Sigmoid colon (tissue), 7 donors: ENCODE measurements at regions of chr7 and their contacts with region 1.

Region 1: DNA sequence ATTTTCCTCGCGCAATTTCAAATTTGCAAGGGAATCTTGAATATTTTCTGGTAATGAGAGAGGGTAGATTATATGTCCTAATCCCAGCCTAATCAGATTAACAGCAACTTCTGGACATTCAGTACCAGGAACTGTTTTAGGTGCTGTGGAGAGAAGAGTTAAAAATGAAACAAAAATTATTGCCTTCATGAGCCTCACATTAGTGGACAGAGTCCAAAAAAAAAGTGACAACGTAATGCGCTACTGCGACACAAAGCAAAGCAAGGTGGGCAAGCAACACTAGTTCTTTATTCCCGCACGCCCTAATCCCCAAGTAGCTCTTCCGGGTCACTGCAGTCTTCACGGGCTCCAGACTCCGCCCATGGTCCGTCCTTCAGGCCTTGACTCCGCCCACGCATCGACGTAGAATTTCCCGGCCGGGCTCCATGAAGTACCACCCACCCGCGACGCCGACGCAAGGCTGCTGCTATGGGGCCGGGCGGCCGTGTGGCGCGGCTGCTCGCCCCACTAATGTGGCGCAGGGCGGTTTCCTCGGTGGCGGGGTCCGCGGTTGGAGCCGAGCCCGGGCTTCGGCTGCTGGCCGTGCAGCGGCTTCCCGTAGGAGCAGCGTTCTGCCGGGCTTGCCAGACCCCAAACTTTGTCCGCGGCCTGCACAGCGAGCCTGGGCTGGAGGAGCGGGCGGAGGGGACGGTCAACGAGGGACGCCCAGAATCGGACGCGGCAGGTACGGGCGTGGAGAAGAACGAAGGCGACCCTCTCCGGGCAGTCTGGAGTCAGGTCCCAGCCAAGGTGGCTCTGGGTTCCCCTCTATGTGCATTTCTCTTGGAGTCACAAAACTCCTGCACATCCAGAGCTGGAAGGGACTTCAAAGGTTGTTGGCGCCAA is at the start of gene MALSU1:
- DNase-seq: peak; percentile 98
- H3K4me3 ChIP-seq: peak within 1 kb of the TSS; percentile 91 to 94 (median 92)
- H3K27ac ChIP-seq: peak within 1 kb of the TSS; percentile 81 to 90 (median 88)
- H3K4me1 ChIP-seq: peaks cover 0 to 50% (median 40%) of the 10 kb centered on the region in 4 donors
- H3K27me3 ChIP-seq: no peaks in the 10 kb centered on the region
- CTCF ChIP-seq: no peak
- EP300 ChIP-seq: peak in 1 of 4 donors; percentile 45
- POLR2A ChIP-seq: peak; percentile 79 to 83
- total RNA-seq, gene MALSU1: 38.5 to 94.0 (median 71.1) TPM

Region 2: GRCh38 chr7:22860784-22861482 is 438.2 kb before region 1 on chr7:
- intact Hi-C with region 1: no loop called
- DNase-seq: no peak
- H3K4me3 ChIP-seq: no peak overlapping the region
- H3K27ac ChIP-seq: peak overlapping the region; percentile 44 to 98 (median 86)
- H3K4me1 ChIP-seq: peaks cover 0 to 40% (median 30%) of the 10 kb centered on the region in 4 donors
- H3K27me3 ChIP-seq: no peaks in the 10 kb centered on the region
- CTCF ChIP-seq: peak in 1 of 4 experiments; percentile 29
- EP300 ChIP-seq: no peak
- POLR2A ChIP-seq: no peak

Region 3: DNA sequence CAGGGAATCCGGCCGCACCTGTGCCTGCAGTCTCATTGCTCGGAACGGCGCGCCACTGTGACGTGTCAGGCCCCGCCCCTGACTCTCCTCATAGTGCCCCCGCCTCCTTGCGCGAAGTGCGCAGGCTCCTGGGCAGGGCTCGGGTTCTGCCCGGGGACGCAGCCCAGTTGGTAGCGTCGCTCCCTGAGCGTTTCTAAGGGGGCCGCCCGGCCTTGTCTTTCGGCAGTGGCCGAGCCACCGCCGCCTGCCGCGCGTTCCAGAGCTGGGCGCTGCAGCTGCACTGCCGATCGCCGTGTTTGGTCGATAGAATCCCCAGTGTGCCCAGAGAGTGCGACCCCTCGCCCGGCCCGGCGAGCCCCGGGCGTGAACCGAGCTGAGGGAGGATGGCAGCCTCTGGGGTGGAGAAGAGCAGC is 193.5 kb before region 1 on chr7 and contains the start of gene KLHL7:
- intact Hi-C with region 1: loop called (anchors 5 kb)
- DNase-seq: peak; percentile 98
- H3K4me3 ChIP-seq: peak within 1 kb of the TSS; percentile 64 to 97 (median 90)
- H3K27ac ChIP-seq: peak within 1 kb of the TSS; percentile 87 to 99 (median 96)
- H3K4me1 ChIP-seq: peaks cover 0 to 37% (median 28%) of the 10 kb centered on the region in 4 donors
- H3K27me3 ChIP-seq: no peaks in the 10 kb centered on the region
- CTCF ChIP-seq: no peak
- EP300 ChIP-seq: no peak
- POLR2A ChIP-seq: peak; percentile 84 to 93
- total RNA-seq, gene KLHL7: 26.9 to 42.5 (median 28.4) TPM

Region 4: GRCh38 chr7:23117841-23118240 is 181.3 kb before region 1 on chr7:
- intact Hi-C with region 1: no loop called
- DNase-seq: no peak
- H3K4me3 ChIP-seq: no peak overlapping the region
- H3K27ac ChIP-seq: no peak overlapping the region
- H3K4me1 ChIP-seq: peaks cover 0 to 20% (median 9%) of the 10 kb centered on the region in 4 donors
- H3K27me3 ChIP-seq: no peaks in the 10 kb centered on the region
- CTCF ChIP-seq: no peak
- EP300 ChIP-seq: no peak
- POLR2A ChIP-seq: no peak

Region 5: DNA sequence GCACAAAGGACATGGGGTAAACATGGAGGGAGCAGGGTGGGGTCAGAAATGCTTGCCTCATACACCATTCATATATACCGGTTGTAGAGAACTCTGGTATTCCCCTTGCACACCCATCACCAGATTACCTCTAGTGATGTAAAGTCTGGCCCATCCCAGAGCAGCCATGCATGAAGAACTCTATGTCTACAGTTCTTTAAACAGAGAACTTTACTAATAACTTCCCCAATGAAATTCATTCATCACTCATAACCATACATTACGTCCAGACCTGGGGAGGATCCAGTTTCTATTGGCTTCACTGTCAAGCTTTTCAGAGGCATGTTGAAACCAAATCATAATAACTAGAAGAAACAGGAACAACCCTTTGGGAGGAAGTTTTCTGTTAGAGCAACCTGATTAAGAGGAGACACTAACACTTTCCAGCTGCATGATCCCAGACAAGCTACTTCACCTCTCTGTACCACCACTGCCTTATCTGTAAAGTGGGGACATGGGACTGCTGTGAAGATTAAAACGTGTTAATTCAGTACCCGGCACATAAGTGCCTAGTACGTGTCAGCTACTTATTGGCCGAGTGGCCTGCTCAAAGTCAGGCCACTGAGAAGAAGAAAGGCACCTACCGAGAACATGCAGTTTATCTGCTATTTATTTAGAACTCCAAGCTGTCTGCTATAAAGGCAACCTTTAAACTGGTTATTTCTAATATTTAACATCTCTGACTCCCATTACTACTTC is 111.5 kb after region 1 on chr7:
- intact Hi-C with region 1: no loop called
- DNase-seq: no peak
- H3K4me3 ChIP-seq: no peak overlapping the region
- H3K27ac ChIP-seq: no peak overlapping the region
- H3K4me1 ChIP-seq: no peaks in the 10 kb centered on the region
- H3K27me3 ChIP-seq: no peaks in the 10 kb centered on the region
- CTCF ChIP-seq: no peak
- EP300 ChIP-seq: no peak
- POLR2A ChIP-seq: no peak

Region 6: GRCh38 chr7:23531794-23532489 is 232.8 kb after region 1 on chr7 and contains the start of gene TRA2A:
- intact Hi-C with region 1: loop called (anchors 5 kb)
- DNase-seq: peak; percentile 99
- H3K4me3 ChIP-seq: peak within 1 kb of the TSS; percentile 72 to 82 (median 74)
- H3K27ac ChIP-seq: peak within 1 kb of the TSS; percentile 92 to 97 (median 94)
- H3K4me1 ChIP-seq: peaks cover 0 to 35% (median 33%) of the 10 kb centered on the region in 4 donors
- H3K27me3 ChIP-seq: no peaks in the 10 kb centered on the region
- CTCF ChIP-seq: no peak
- EP300 ChIP-seq: no peak
- POLR2A ChIP-seq: peak; percentile 88 to 89
- total RNA-seq, gene TRA2A: 37.0 to 84.5 (median 42.2) TPM

Region 7: DNA sequence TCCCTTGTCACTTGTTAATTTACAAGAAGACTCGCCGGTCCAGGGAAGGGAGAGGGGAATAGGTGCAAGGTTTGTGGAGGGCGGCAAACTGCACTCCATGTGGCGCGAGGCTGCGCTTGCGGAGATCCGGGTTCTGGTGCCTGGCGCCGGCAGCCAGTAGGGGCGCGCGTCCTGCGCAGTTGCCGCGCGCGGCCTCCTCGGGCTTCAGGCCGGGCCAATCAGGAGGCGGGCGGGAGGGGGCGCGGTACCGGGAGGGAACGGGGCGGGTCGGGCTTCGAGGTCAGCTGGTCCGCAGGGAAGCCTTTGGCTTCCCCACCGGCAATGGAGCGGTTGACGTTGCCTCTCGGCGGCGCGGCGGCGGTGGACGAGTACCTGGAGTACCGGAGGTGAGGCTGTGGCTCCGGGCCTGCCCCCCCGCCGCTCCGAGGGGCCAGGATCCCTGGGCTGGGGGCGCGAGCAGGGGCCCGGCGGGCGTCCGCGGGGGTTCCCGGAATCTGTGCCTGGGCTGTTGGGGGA is 380.8 kb after region 1 on chr7 and contains the start of gene FAM221A:
- intact Hi-C with region 1: loop called (anchors 10 kb)
- DNase-seq: peak; percentile 95
- H3K4me3 ChIP-seq: peak within 1 kb of the TSS; percentile 62 to 83 (median 66)
- H3K27ac ChIP-seq: peak within 1 kb of the TSS; percentile 83 to 86 (median 84)
- H3K4me1 ChIP-seq: peaks cover 0 to 15% (median 8%) of the 10 kb centered on the region in 4 donors
- H3K27me3 ChIP-seq: no peaks in the 10 kb centered on the region
- CTCF ChIP-seq: peak; percentile 57 to 89 (median 63)
- EP300 ChIP-seq: no peak
- POLR2A ChIP-seq: no peak
- total RNA-seq, gene FAM221A: 9.4 to 16.3 (median 11.3) TPM

Region 8: GRCh38 chr7:23837659-23838058 is 538.5 kb after region 1 on chr7:
- intact Hi-C with region 1: no loop called
- DNase-seq: no peak
- H3K4me3 ChIP-seq: no peak overlapping the region
- H3K27ac ChIP-seq: no peak overlapping the region
- H3K4me1 ChIP-seq: no peaks in the 10 kb centered on the region
- H3K27me3 ChIP-seq: no peaks in the 10 kb centered on the region
- CTCF ChIP-seq: no peak
- EP300 ChIP-seq: no peak
- POLR2A ChIP-seq: no peak